Heart left ventricle (tissue), 16 donors: ENCODE measurements at regions of chr1 and their contacts with region 1.

Region 1: DNA sequence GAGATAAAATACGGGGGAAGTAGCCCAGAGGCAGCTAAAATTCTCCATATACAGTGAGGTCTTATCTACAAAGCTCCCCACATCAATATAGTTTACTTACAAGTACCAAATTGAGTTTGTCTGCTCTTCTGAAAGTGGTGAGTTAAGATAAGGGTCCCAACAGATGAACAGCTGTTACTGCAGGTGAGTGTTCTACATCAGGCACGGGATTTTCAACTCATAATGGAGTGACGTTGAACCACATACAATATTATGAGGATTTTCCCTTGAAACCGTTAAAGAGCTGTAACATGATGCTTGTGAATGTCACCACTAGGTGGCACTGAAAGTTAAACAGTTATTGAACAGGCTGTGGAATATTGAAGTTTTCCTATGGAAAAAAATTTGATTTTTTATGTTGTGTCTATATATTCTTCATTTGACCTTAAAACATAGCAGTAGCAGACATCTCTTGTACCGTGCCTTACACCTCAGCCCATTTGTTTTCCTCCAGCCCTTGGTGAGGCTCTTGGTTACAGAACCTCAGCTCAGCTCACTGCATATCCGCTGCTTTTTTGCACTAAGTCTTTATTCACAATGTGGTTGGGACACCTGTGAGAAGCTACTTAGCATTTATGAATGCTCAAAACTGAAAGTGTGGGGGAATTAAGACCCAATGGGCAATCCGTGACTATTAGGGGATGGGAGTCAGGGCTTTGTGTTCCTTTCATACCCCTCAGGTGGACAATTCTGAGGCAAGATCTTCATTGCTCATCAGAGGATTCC is 23.2 kb downstream of the CD1D start:
- DNase-seq: no peak
- ATAC-seq: peak; percentile 51 to 77 (median 67)
- H3K4me3 ChIP-seq: no peak overlapping the region
- H3K27ac ChIP-seq: no peak overlapping the region
- H3K4me1 ChIP-seq: peaks cover 0 to 12% (median 0%) of the 10 kb centered on the region in 12 donors
- H3K27me3 ChIP-seq: peaks cover 0 to 8% (median 0%) of the 10 kb centered on the region in 9 donors
- CTCF ChIP-seq: peak; percentile 73 to 90 (median 83)
- POLR2A ChIP-seq: no peak

Region 2: GRCh38 chr1:158248118-158248517 is 44.2 kb after region 1 on chr1:
- intact Hi-C with region 1: no loop called
- DNase-seq: peak in 2 of 5 donors; percentile 11 to 18
- ATAC-seq: peak in 3 of 4 donors; percentile 18 to 60 (median 56)
- H3K4me3 ChIP-seq: no peak overlapping the region
- H3K27ac ChIP-seq: peak overlapping the region in 1 of 12 donors; percentile 18
- H3K4me1 ChIP-seq: peaks cover 0 to 47% (median 4%) of the 10 kb centered on the region in 12 donors
- H3K27me3 ChIP-seq: peaks cover 0 to 3% (median 0%) of the 10 kb centered on the region in 9 donors
- CTCF ChIP-seq: no peak
- POLR2A ChIP-seq: no peak

Region 3: GRCh38 chr1:158496374-158496773 is 292.5 kb after region 1 on chr1:
- intact Hi-C with region 1: loop called in 4 of 10 experiments (anchors 5 to 10 kb)
- DNase-seq: no peak
- ATAC-seq: no peak
- H3K4me3 ChIP-seq: no peak overlapping the region
- H3K27ac ChIP-seq: no peak overlapping the region
- H3K4me1 ChIP-seq: no peaks in the 10 kb centered on the region
- H3K27me3 ChIP-seq: peaks cover 0 to 14% (median 0%) of the 10 kb centered on the region in 9 donors
- CTCF ChIP-seq: peak in 8 of 12 donors; percentile 8 to 39 (median 32)
- POLR2A ChIP-seq: no peak

Region 4: GRCh38 chr1:158527190-158527815 is 323.4 kb after region 1 on chr1:
- intact Hi-C with region 1: loop called in 3 of 10 experiments (anchors 5 to 10 kb)
- DNase-seq: no peak
- ATAC-seq: peak in 1 of 4 donors; percentile 38
- H3K4me3 ChIP-seq: no peak overlapping the region
- H3K27ac ChIP-seq: no peak overlapping the region
- H3K4me1 ChIP-seq: no peaks in the 10 kb centered on the region
- H3K27me3 ChIP-seq: no peaks in the 10 kb centered on the region
- CTCF ChIP-seq: peak in 9 of 12 donors; percentile 30 to 68 (median 48)
- POLR2A ChIP-seq: no peak

Region 5: GRCh38 chr1:158998781-158999161 is 794.9 kb after region 1 on chr1:
- intact Hi-C with region 1: loop called in 9 of 10 experiments (anchors 2 to 10 kb)
- DNase-seq: peak in 3 of 5 donors; percentile 28 to 64 (median 59)
- ATAC-seq: peak; percentile 45 to 57 (median 56)
- H3K4me3 ChIP-seq: peak overlapping the region; percentile 13 to 65 (median 50)
- H3K27ac ChIP-seq: peak overlapping the region; percentile 55 to 93 (median 82)
- H3K4me1 ChIP-seq: peaks cover 0 to 25% (median 4%) of the 10 kb centered on the region in 12 donors
- H3K27me3 ChIP-seq: no peaks in the 10 kb centered on the region
- CTCF ChIP-seq: peak; percentile 84 to 97 (median 92)
- POLR2A ChIP-seq: no peak